ENCODE measurements at regions of chr6 and their contacts with region 1.

Region 1: GRCh38 chr6:149648148-149649145 is at the start of gene KATNA1:
- DNase-seq: peak; percentile 15
- H3K4me3 ChIP-seq: peak within 1 kb of the TSS; percentile 89
- CTCF ChIP-seq: no peak

Region 2: DNA sequence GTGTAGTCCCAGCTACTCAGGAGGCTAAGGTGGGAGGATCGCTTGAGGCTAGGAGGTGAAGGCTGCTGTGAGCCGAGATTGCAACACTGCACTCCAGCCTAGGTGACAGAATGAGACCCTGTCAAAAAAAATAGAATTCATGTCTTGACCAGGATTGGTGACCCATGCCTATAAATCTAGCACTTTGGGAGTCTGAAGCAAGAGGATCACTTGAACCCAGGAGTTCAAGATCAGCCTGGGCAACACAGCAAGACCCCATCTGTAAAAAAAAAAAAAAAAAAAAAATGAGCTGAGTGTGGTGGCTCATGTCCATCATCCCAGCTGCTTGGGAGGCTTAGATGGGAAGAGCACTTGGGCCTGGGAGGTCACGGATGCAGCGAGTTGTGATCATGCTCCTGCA is 47.9 kb before region 1 on chr6:
- in situ Hi-C with region 1: loop called (anchors 5 kb)
- DNase-seq: no peak
- H3K4me3 ChIP-seq: no peak overlapping the region
- CTCF ChIP-seq: no peak

Region 3: GRCh38 chr6:149614337-149614736 is 34.1 kb before region 1 on chr6:
- in situ Hi-C with region 1: no loop called
- DNase-seq: no peak
- H3K4me3 ChIP-seq: no peak overlapping the region
- CTCF ChIP-seq: no peak

Region 4: DNA sequence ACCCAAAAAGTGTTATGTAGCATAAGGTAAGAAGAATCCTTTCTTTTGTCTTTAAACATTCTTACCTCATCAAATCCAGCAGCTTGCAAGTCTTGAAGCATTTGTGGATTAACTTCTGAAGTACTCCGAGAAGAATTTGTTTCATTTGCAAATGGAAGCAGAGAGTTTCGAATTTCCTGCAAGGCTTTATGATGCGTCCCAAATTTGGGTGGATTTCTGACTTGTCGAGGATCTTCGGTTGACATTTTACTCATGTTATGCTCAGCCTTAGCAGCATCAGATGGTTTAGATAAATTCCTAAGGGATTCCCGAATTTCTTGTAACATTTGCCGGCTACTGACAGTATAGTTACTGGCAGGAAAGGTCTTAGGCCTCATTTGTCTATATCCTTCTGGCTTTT is 53.3 kb after region 1 on chr6:
- in situ Hi-C with region 1: no loop called
- DNase-seq: no peak
- H3K4me3 ChIP-seq: no peak overlapping the region
- CTCF ChIP-seq: no peak

Region 5: DNA sequence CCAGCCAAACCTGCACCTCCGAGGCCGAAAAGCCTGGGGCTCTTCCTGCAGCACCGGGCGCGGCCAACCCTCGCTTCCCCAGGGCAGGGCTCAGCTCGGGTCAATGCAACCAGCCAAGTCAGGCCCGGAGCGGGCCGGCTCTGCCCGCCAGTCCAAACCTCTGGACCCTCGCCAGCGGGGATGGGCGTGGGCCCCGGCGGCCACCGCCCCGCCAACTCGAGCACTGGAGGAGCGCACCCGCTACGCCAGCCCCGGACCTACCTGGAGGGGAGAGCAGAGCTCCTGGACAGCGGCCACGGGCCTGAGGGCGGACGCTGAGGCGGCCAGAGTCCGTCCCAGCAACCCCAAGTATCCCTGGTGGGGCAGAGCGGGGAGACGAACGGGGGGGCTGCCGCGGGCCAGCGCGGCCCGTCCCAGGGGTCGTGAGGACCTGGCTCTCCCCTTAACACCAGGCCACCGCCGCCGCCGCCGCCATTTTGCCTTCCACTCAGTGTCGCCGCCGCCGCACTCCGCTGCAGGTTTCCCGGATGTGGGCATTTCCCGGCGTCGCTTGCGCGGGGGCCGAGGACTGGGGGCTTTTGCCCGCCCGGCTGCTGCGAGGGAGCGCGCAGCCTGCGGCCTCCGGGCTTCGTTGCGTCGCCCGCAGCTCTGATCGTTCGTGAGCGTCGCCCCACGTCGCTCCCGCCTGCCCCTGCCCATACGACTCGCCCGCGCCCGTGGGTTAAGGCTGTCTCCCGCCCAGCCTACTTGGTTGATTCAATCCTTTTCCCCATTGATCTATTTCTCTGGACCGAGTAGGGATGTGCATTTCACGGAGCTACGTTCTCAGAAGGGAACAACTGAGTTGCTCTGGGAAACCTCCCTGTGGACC is 69.4 kb after region 1 on chr6 and contains the start of gene LATS1:
- in situ Hi-C with region 1: no loop called
- DNase-seq: peak; percentile 56
- H3K4me3 ChIP-seq: peak within 1 kb of the TSS; percentile 95
- CTCF ChIP-seq: no peak

Region 6: DNA sequence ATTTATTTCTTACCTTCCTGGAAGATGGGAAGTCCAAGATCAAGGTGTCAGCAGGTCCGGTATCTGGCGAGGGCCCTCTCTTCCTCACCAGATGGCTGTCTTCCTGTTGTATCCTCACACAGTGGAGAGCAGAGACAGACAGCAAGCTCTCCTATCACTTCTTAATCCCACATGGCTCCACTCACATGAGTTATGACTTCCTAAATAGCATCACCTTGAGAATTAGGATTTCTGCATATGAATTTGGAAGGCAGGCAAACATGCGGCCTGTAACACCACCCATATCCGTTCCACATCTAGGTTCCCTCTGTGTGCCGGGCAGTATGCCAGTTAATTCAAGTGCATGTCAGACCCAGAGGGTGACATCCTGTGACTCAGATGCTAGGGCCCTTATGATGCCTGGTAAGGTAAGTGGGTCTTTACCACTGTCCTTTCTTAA is 247.4 kb after region 1 on chr6:
- in situ Hi-C with region 1: no loop called
- DNase-seq: peak; percentile 43
- H3K4me3 ChIP-seq: no peak overlapping the region
- CTCF ChIP-seq: no peak